Ascending aorta (tissue), 2 donors: ENCODE measurements at regions of chr12 and their contacts with region 1.

Region 1: GRCh38 chr12:27434673-27435565 is 11.6 kb upstream of the SMCO2 start:
- DNase-seq: no peak
- H3K4me3 ChIP-seq: no peak overlapping the region
- H3K27ac ChIP-seq: no peak overlapping the region
- H3K4me1 ChIP-seq: peaks cover 0 to 2% of the 10 kb centered on the region in 2 donors
- H3K27me3 ChIP-seq: no peaks in the 10 kb centered on the region
- CTCF ChIP-seq: peak in 2 of 3 experiments; percentile 70 to 71

Region 2: GRCh38 chr12:26028953-26029735 is 1405.8 kb before region 1 on chr12:
- intact Hi-C with region 1: no loop called
- DNase-seq: no peak
- H3K4me3 ChIP-seq: peak overlapping the region in 1 of 2 donors; percentile 6
- H3K27ac ChIP-seq: peak overlapping the region in 1 of 2 donors; percentile 32
- H3K4me1 ChIP-seq: peaks cover 0 to 49% of the 10 kb centered on the region in 2 donors
- H3K27me3 ChIP-seq: no peaks in the 10 kb centered on the region
- CTCF ChIP-seq: peak; percentile 47 to 76 (median 70)

Region 3: DNA sequence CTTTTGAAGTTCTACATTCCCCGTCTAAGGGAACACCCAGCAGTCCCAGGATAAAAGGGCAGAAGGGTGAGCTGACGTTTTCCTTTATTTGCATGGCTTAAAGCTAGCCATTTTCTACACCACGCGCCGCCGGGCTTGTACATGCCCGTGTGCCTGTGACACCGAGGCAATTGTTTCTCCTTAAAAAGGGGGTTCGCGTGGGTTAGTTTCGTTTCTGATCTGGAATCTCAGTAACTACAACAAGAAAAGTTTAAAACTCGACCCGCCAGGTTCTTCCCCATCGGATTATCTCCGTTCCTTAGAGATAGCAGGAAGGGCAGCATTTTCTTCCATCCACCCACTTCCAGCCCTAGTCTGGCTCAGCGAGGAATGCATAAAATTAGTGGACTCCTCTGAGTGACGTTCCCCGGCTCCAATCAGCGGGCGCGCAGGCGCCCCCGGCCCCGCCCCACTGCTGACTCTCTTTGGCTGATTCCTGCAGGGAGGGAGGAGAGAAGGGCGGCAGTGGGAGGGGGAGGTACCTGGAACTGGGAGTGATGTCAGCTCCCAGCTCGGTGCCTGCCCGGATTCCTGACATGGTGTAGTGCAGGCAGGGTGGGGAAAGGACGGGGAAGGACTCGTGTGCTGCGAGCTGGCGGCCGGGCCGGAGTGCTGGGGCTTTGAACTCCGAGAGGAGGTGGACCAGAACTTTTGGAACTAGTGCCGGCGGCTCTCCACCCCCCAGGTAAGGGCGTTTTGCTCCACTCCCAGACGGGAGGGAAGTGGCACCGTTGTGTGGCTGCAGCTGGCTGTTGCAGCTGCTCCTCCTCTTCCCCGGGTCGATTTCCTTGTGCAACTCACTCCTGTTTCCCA is 88.9 kb after region 1 on chr12 and contains the start of gene PPFIBP1:
- intact Hi-C with region 1: loop called (anchors 10 kb)
- DNase-seq: peak; percentile 99 to 100
- H3K4me3 ChIP-seq: peak within 1 kb of the TSS; percentile 77 to 79
- H3K27ac ChIP-seq: peak within 1 kb of the TSS; percentile 88 to 90
- H3K4me1 ChIP-seq: peaks cover 3 to 16% of the 10 kb centered on the region in 2 donors
- H3K27me3 ChIP-seq: no peaks in the 10 kb centered on the region
- CTCF ChIP-seq: peak in 2 of 3 experiments; percentile 31 to 44
- total RNA-seq, gene PPFIBP1: 56.4 TPM

Region 4: DNA sequence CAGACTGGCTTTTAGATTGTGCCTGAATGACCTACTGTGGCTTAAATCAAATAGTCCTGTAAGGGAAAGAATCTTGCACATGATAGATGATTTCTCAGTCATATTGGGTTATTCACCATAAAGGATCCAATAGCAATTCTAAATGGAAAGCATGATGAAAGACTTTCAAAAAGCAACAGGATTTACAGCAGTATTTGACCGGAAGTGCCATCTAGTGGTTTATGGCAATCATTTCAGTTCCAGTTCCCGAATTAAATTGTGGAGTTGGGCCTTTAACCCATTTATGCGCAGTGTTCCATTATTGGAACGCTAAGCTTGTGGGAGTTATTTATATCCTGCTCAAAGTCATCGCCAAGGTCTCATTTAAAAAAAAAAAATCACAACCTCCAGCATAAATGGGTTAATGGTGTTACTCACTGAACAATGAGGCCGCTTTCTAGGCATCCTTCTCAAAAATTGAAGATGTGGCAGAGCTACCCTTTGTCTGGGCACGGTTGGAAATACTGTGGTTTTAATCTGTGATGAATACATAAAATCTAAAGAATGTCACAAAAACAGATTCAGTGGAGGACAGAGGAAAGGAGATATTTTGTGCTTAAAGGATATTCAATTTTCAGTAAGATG is 200.5 kb after region 1 on chr12:
- intact Hi-C with region 1: loop called (anchors 5 kb)
- DNase-seq: no peak
- H3K4me3 ChIP-seq: no peak overlapping the region
- H3K27ac ChIP-seq: peak overlapping the region in 1 of 2 donors; percentile 27
- H3K4me1 ChIP-seq: peaks cover 4 to 23% of the 10 kb centered on the region in 2 donors
- H3K27me3 ChIP-seq: no peaks in the 10 kb centered on the region
- CTCF ChIP-seq: peak; percentile 58 to 71 (median 70)

Region 5: DNA sequence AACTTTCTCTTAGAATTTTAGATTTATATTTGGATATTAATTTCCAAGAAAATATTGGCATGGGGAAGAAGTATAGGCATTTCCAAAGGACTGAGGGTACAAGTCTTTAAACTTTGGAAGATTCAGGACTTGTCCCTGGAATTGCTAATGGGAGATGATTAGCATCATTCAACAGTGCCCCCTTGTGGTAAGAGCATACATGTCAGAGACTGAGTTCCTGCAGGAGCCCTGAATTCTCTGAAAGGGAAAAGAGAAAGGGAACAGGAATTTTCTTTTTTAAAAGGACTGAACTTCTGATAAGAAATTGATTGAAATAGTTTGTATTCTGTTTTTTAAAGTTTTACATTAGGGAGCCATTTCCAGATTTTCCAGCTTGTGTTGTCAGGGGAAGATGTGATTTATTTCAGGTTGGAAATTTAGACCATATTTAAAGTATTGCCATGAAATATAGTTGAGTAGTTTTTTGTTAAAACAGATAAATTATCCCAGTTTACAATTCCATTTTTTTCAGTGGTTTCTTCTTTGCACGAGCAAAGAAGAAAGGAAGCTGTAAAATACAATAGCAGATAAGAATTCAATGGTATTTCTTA is 217.3 kb after region 1 on chr12:
- intact Hi-C with region 1: loop called (anchors 5 kb)
- DNase-seq: no peak
- H3K4me3 ChIP-seq: no peak overlapping the region
- H3K27ac ChIP-seq: peak overlapping the region in 1 of 2 donors; percentile 2
- H3K4me1 ChIP-seq: peaks cover 0 to 14% of the 10 kb centered on the region in 2 donors
- H3K27me3 ChIP-seq: no peaks in the 10 kb centered on the region
- CTCF ChIP-seq: peak; percentile 74 to 85 (median 79)

Region 6: GRCh38 chr12:28268608-28269229 is 833.8 kb after region 1 on chr12:
- intact Hi-C with region 1: no loop called
- DNase-seq: no peak
- H3K4me3 ChIP-seq: no peak overlapping the region
- H3K27ac ChIP-seq: no peak overlapping the region
- H3K4me1 ChIP-seq: no peaks in the 10 kb centered on the region
- H3K27me3 ChIP-seq: no peaks in the 10 kb centered on the region
- CTCF ChIP-seq: no peak